ENCODE measurements at regions of chr17 and their contacts with region 1.

Region 1: DNA sequence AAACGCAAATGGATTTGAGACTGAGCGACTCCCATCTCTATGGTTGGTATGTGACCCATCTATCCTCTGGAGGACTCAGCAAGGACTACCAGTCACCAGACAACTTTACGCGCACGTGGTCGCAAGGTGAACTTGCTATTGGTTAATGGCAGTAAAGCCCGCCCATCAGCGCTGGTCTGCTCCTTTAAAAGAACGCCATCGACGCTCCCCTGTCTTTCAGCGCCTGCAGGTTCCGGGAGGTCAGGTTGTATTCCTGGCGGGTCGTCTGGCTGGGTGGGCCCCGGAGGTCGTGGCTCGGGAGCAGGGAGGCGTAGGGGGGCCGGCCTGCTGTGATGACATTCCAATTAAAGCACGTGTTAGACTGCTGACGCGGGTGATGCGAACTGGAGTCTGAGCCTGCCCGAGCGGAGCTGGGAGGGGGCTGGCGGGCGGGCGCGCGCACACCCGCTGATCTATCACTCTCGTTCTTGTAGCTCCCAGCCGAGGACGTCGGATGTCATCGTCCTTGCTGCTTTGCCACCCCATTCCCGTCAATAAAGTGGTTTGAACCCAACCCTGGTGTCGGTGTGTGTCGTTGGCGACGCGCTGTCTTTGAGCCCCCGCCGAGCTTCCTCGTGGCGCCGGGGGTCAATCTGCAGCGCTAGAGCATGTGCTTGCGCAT is 15.9 kb upstream of the ERN1 start:
- DNase-seq: peak; percentile 96 to 99 (median 98)
- H3K4me3 ChIP-seq: peak overlapping the region; percentile 73
- H3K27ac ChIP-seq: peak overlapping the region; percentile 82 to 98
- H3K4me1 ChIP-seq: peaks cover 5% of the 10 kb centered on the region
- H3K27me3 ChIP-seq: no peaks in the 10 kb centered on the region
- CTCF ChIP-seq: peak in 2 of 3 donors; percentile 9 to 23
- EP300 ChIP-seq: peak; percentile 59
- POLR2A ChIP-seq: peak; percentile 97

Region 2: DNA sequence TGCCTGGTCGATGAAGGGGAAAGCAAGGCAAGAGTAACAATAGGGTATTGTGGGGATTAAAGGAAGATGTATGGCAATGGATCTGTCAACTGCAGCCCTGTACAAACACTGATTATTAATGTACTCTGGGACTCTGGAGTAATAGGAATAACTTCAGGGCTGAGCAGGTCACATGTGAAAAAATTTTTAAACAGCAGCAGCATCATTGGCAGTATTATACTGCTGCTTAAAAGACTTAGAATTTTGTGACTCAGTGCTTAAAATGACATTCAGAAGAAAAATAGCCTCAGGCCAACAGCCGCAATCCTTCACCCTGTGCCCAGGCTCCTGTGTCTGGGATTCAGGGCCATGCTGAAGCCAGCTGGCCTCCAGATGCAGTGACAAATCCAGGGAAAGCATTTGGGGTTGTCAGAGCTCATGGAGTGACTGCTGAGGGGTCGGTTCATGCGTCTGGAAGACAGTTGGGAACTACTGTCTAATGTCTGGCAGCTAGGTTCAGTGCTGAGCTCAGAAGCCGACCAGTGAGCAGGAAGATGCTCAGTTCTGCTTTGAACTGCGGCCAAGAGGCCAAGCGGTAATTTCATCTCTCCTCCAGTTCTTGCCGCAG is 95.0 kb after region 1 on chr17:
- intact Hi-C with region 1: no loop called
- DNase-seq: peak; percentile 65 to 77 (median 71)
- H3K4me3 ChIP-seq: no peak overlapping the region
- H3K27ac ChIP-seq: peak overlapping the region in 1 of 2 donors; percentile 35
- H3K4me1 ChIP-seq: peaks cover 15% of the 10 kb centered on the region
- H3K27me3 ChIP-seq: no peaks in the 10 kb centered on the region
- CTCF ChIP-seq: no peak
- EP300 ChIP-seq: no peak
- POLR2A ChIP-seq: no peak

Region 3: DNA sequence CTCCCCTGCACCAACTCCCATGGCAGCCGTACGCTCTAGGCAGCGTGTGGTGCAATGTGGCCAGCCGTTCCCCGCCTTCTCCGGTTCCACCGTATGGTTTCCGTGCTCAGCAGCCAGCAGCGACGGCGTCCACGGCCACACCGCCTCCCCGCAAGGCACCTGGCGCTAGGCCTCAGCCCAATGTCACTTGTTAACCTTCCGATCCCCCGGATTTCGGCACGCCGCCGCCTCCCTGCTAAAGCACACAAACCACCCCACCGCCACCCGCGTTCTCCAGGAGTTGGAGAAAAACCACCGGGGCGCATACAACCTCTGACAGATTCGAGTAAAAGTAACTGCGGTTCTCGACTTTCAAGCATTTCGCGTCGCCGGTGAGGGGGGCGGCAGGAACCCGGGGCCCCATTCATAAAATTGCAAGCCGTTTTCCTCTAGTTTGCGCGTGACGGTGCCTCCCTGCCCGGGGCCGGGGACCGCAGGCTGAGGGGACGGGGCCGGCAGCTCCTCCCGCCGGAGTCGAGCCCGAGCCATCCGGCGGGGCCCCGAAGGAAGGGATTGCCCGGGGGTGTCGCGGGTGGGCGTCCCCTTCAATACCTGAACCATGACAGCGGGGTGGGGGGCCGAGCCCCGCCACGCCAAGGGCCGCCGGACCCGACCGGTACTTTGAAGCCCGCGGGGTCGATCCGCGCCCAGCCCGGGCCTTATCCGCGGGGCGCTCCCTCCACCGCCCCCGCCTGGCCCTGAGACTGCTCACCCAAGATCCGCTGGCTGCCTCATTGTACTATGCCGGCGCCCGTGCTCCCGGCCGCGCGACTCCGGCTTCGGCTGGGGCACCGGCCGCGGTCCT is 116.8 kb after region 1 on chr17 and contains the start of gene TEX2:
- intact Hi-C with region 1: loop called in 2 of 4 experiments (anchors 5 to 10 kb)
- DNase-seq: peak; percentile 30 to 60 (median 49)
- H3K4me3 ChIP-seq: peak within 1 kb of the TSS; percentile 88
- H3K27ac ChIP-seq: peak within 1 kb of the TSS; percentile 58 to 65
- H3K4me1 ChIP-seq: peaks cover 5% of the 10 kb centered on the region
- H3K27me3 ChIP-seq: no peaks in the 10 kb centered on the region
- CTCF ChIP-seq: no peak
- EP300 ChIP-seq: no peak
- POLR2A ChIP-seq: peak; percentile 48
- total RNA-seq, gene TEX2: 20.9 to 36.7 (median 31.7) TPM

Measured in ovary (tissue), 10 donors.